ENCODE measurements at regions of chr4 and their contacts with region 1.

Region 1: GRCh38 chr4:183636923-183637322 is 22.1 kb downstream of the RWDD4 start:
- DNase-seq: no peak
- ATAC-seq: peak; percentile 66; the same call in 1 of the 2 replicates
- H3K4me3 ChIP-seq: peak overlapping the region; percentile 36 to 53
- H3K27ac ChIP-seq: peak overlapping the region; percentile 89
- H3K4me1 ChIP-seq: peaks cover 24% of the 10 kb centered on the region
- H3K27me3 ChIP-seq: no peaks in the 10 kb centered on the region
- CTCF ChIP-seq: no peak

Region 2: GRCh38 chr4:183546369-183546768 is 90.6 kb before region 1 on chr4:
- CTCF ChIA-PET with region 1: no interaction called
- POLR2A ChIA-PET with region 1: interaction called, 10 read pairs
- in situ Hi-C with region 1: no loop called
- intact Hi-C with region 1: no loop called
- DNase-seq: no peak
- ATAC-seq: no peak
- H3K4me3 ChIP-seq: no peak overlapping the region
- H3K27ac ChIP-seq: no peak overlapping the region
- H3K4me1 ChIP-seq: no peaks in the 10 kb centered on the region
- H3K27me3 ChIP-seq: no peaks in the 10 kb centered on the region
- CTCF ChIP-seq: no peak

Measured in Panc1 (cell line).